ENCODE measurements at regions of chr20 and their contacts with region 1.

Region 1: DNA sequence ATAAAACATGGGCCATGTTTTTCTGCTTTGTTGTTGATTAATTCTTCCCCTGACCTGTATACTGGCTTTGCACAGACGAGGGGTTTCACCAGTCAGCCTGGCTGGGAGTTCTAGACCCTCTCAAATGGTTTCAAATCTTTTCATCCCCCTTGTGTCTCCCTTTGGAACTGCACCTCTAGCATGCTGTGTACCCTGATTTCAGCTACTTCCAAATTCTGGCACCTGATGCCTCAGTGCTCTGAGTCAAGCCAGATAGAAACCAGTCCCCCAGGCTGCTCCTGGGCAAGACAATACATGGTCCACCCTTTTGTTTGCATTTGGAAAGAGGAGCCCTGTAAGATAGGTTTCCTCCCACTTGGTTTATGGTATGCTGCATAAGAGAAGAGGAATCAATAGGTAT is 290.2 kb downstream of the BTBD3 start:
- DNase-seq: no peak
- ATAC-seq: peak in 1 of 4 donors; percentile 46
- H3K4me3 ChIP-seq: no peak overlapping the region
- H3K27ac ChIP-seq: no peak overlapping the region
- H3K4me1 ChIP-seq: no peaks in the 10 kb centered on the region
- H3K27me3 ChIP-seq: no peaks in the 10 kb centered on the region
- CTCF ChIP-seq: peak; percentile 27 to 71 (median 52)
- POLR2A ChIP-seq: no peak

Region 2: GRCh38 chr20:11676630-11677284 is 531.1 kb before region 1 on chr20:
- intact Hi-C with region 1: loop called in 8 of 10 experiments (anchors 5 to 10 kb)
- DNase-seq: peak; percentile 26 to 58 (median 48)
- ATAC-seq: peak in 3 of 4 donors; percentile 90 to 95 (median 90)
- H3K4me3 ChIP-seq: no peak overlapping the region
- H3K27ac ChIP-seq: no peak overlapping the region
- H3K4me1 ChIP-seq: peaks cover 0 to 22% (median 0%) of the 10 kb centered on the region in 12 donors
- H3K27me3 ChIP-seq: no peaks in the 10 kb centered on the region
- CTCF ChIP-seq: peak; percentile 72 to 92 (median 81)
- POLR2A ChIP-seq: no peak

Region 3: GRCh38 chr20:12012241-12013222 is 195.3 kb before region 1 on chr20:
- intact Hi-C with region 1: loop called in 2 of 10 experiments (anchors 10 kb)
- DNase-seq: peak in 1 of 5 donors; percentile 11
- ATAC-seq: peak in 3 of 4 donors; percentile 41 to 68 (median 41)
- H3K4me3 ChIP-seq: no peak overlapping the region
- H3K27ac ChIP-seq: no peak overlapping the region
- H3K4me1 ChIP-seq: peaks cover 0 to 21% (median 6%) of the 10 kb centered on the region in 12 donors
- H3K27me3 ChIP-seq: no peaks in the 10 kb centered on the region
- CTCF ChIP-seq: peak; percentile 62 to 91 (median 74)
- POLR2A ChIP-seq: no peak

Region 4: DNA sequence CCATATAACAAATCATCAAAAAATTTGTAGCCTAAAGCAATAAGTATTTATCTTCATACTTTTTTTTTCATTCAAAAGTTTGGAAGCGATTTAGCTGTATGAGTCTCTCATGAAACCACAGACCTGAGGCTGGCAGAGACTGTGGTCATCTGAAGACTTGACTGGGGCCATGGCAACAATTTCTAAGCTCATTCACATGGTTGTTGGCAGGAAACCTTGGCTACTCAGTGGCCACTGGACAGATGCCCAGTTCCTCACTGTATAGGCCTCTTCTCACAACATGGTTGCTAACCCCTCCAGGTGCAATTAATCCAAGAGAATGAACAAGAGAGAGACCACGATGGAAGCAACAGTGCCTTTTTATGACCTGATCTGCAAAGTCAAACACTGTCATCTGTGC is 54.2 kb before region 1 on chr20:
- intact Hi-C with region 1: loop called in 1 of 10 experiments (anchors 2 kb)
- DNase-seq: no peak
- ATAC-seq: no peak
- H3K4me3 ChIP-seq: no peak overlapping the region
- H3K27ac ChIP-seq: no peak overlapping the region
- H3K4me1 ChIP-seq: no peaks in the 10 kb centered on the region
- H3K27me3 ChIP-seq: no peaks in the 10 kb centered on the region
- CTCF ChIP-seq: no peak
- POLR2A ChIP-seq: no peak

Region 5: GRCh38 chr20:12528591-12529041 is 320.7 kb after region 1 on chr20:
- intact Hi-C with region 1: no loop called
- DNase-seq: no peak
- ATAC-seq: no peak
- H3K4me3 ChIP-seq: no peak overlapping the region
- H3K27ac ChIP-seq: no peak overlapping the region
- H3K4me1 ChIP-seq: no peaks in the 10 kb centered on the region
- H3K27me3 ChIP-seq: no peaks in the 10 kb centered on the region
- CTCF ChIP-seq: no peak
- POLR2A ChIP-seq: no peak

Region 6: DNA sequence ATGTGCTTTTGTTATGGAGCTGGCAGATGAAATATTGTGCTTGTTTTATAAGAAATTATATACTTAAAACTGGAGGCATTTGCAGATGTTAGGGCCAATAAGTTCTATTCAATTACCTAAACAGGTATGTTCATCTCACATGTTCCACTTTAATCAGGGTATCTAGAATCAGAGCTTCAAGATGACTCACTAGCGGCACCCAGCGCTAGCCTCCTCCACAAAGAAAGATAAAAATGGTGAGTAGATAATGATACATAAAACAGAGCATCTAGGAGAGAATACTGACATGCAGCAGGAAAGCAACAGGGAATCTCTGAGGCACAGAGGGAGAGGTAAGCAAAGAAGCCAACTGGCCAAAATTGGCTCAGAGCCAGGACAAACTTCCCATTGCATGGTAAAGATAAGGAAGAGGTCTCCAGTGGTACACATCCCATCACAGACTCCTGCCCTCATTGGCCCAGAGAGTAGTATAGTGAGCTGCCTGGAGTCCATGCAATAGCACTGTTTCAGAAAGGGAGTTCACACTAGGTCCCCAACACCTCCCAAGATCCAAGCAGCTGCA is 600.2 kb after region 1 on chr20:
- intact Hi-C with region 1: no loop called
- DNase-seq: no peak
- ATAC-seq: no peak
- H3K4me3 ChIP-seq: no peak overlapping the region
- H3K27ac ChIP-seq: no peak overlapping the region
- H3K4me1 ChIP-seq: no peaks in the 10 kb centered on the region
- H3K27me3 ChIP-seq: no peaks in the 10 kb centered on the region
- CTCF ChIP-seq: no peak
- POLR2A ChIP-seq: no peak